CD14-positive monocyte (primary cell): ENCODE measurements at regions of chr3 and their contacts with region 1.

Region 1: GRCh38 chr3:18703798-18704197 is 278.7 kb upstream of the SATB1 start:
- DNase-seq: no peak
- H3K4me3 ChIP-seq: no peak overlapping the region
- H3K4me3 Mint-ChIP-seq: no peak overlapping the region
- H3K27ac ChIP-seq: no peak overlapping the region
- H3K27ac Mint-ChIP-seq: no peak overlapping the region
- H3K4me1 ChIP-seq: no peaks in the 10 kb centered on the region
- H3K4me1 Mint-ChIP-seq: no peaks in the 10 kb centered on the region
- H3K27me3 ChIP-seq: no peaks in the 10 kb centered on the region
- H3K27me3 Mint-ChIP-seq: no peaks in the 10 kb centered on the region
- CTCF ChIP-seq: no peak

Region 2: DNA sequence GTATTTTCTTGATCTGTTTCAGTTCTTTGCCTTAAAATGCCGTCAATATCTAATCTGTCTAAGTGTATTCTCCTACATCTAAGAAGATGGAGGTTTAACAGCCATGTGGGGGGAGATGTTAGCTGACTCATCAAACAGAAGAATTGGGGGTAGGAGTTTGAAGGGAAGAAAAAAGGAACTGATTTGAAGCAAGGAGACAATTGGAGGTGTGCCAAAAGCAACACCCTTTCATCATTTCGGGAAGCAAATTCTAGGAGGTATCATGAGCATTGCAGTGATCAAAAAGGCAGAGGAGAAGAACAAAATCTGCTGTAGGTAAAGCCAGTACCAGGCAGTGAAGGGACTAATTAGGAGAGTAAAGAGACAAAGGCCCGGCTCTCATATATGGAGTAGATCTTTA is 624.1 kb before region 1 on chr3:
- intact Hi-C with region 1: loop called in 1 of 2 experiments (anchors 10 kb)
- DNase-seq: peak; percentile 2 to 17 (median 15)
- H3K4me3 ChIP-seq: no peak overlapping the region
- H3K4me3 Mint-ChIP-seq: no peak overlapping the region
- H3K27ac ChIP-seq: no peak overlapping the region
- H3K27ac Mint-ChIP-seq: no peak overlapping the region
- H3K4me1 ChIP-seq: peaks cover 2 to 7% of the 10 kb centered on the region in 2 donors
- H3K4me1 Mint-ChIP-seq: peaks cover 17% of the 10 kb centered on the region
- H3K27me3 ChIP-seq: no peaks in the 10 kb centered on the region
- H3K27me3 Mint-ChIP-seq: no peaks in the 10 kb centered on the region
- CTCF ChIP-seq: no peak